ENCODE measurements at regions of chr14 and their contacts with region 1.

Region 1: DNA sequence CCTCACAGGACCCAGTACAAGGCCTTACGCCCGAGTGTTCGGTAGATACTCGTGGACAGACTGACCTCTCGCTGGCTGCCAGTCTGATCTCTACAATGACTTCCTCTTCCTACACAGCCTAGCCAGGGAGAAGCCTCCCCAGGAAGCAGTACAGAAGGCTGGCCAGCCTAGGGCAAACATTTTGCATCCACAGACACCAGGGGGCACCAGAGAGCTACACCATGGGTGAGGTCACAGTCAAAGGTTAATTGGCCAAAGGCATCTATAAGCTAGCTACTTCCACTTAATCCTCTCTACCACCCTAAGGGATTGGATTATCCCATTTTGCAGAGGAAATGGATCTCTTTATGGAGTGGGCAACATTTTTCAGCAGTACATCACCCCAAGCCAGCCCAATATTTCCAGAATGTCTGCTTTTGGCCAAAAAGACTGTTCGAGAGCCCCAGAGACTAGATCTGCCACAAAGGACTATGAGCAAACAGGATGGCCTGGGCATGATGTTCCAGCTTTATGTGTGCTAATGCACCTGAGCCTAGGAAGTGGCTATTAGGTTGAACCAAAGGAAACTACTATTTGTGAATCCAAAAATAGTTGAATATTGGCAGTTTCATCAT is 14.6 kb upstream of the PNMA1 start:
- DNase-seq: peak; percentile 91
- ATAC-seq: peak; percentile 95
- H3K4me3 Mint-ChIP-seq: no peak overlapping the region
- H3K27ac Mint-ChIP-seq: peak overlapping the region; percentile 78
- H3K4me1 Mint-ChIP-seq: peaks cover 44% of the 10 kb centered on the region
- H3K27me3 Mint-ChIP-seq: no peaks in the 10 kb centered on the region

Region 2: DNA sequence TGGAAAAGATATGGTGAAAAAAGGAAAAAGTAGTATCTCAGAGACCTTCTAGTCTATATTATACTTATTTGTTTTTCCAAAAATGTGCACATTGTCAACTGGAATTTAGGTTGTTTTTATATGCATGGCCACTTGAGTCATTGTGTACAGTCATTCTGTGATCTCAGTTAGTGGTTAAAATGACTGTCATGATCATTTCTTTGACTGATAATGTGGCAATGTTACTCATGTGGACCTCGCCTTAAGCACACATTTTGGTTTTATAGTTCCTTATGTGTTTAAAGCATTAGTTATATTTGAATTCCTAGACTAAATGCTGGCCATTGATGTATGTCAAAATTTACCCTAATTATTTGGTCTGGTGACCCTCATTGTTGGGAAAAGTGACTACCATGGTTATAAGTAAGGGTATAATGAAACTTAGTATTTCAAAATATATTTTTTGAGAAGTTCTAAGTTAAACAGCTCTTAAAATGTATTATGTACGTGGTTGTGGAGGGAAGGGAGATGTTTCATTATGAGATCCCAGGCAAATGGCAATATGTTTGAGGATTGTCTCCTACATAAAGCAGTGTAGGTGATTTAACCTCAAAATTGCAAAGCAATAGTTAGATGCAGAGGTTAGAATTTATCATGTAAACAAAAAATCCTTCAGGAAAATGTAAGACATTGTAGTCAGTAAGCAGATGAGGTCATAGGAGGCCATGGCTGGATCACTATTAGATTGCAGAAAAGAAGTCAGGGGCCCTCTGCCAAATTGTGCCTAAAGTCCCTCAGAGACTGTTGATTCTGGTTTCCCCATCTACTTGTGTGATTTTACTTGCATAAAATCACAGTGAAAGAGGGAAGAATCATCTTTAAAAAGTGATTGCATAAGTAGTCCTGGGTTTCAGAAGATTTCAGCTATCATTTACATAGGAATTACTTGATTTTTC is 32.1 kb before region 1 on chr14:
- CTCF ChIA-PET with region 1: no interaction called
- DNase-seq: no peak
- ATAC-seq: peak; percentile 96
- H3K4me3 Mint-ChIP-seq: peak overlapping the region; percentile 51
- H3K27ac Mint-ChIP-seq: peak overlapping the region; percentile 89
- H3K4me1 Mint-ChIP-seq: peaks cover 35% of the 10 kb centered on the region
- H3K27me3 Mint-ChIP-seq: no peaks in the 10 kb centered on the region

Region 3: GRCh38 chr14:73713803-73714655 is 14.8 kb before region 1 on chr14 and contains the start of gene PNMA1:
- CTCF ChIA-PET with region 1: interaction called, 24 read pairs
- DNase-seq: peak; percentile 92
- ATAC-seq: peak; percentile 79
- H3K4me3 Mint-ChIP-seq: peak within 1 kb of the TSS; percentile 96
- H3K27ac Mint-ChIP-seq: peak within 1 kb of the TSS; percentile 95
- H3K4me1 Mint-ChIP-seq: peaks cover 19% of the 10 kb centered on the region
- H3K27me3 Mint-ChIP-seq: no peaks in the 10 kb centered on the region
- total RNA-seq, gene PNMA1: 27.1 to 36.6 TPM

Region 4: GRCh38 chr14:73753959-73754882 is 25.4 kb after region 1 on chr14:
- CTCF ChIA-PET with region 1: interaction called, 52 read pairs
- DNase-seq: peak; percentile 87
- ATAC-seq: peak; percentile 34
- H3K4me3 Mint-ChIP-seq: peak overlapping the region; percentile 77
- H3K27ac Mint-ChIP-seq: peak overlapping the region; percentile 92
- H3K4me1 Mint-ChIP-seq: peaks cover 91% of the 10 kb centered on the region
- H3K27me3 Mint-ChIP-seq: no peaks in the 10 kb centered on the region

Region 5: GRCh38 chr14:73759714-73760597 is 31.1 kb after region 1 on chr14:
- CTCF ChIA-PET with region 1: interaction called, 52 read pairs
- DNase-seq: peak; percentile 97
- ATAC-seq: peak; percentile 79
- H3K4me3 Mint-ChIP-seq: peak overlapping the region; percentile 87
- H3K27ac Mint-ChIP-seq: peak overlapping the region; percentile 90
- H3K4me1 Mint-ChIP-seq: peaks cover 77% of the 10 kb centered on the region
- H3K27me3 Mint-ChIP-seq: no peaks in the 10 kb centered on the region

Region 6: GRCh38 chr14:73777401-73777800 is 48.6 kb after region 1 on chr14:
- CTCF ChIA-PET with region 1: interaction called, 11 read pairs
- DNase-seq: no peak
- ATAC-seq: peak; percentile 15
- H3K4me3 Mint-ChIP-seq: no peak overlapping the region
- H3K27ac Mint-ChIP-seq: peak overlapping the region; percentile 19
- H3K4me1 Mint-ChIP-seq: peaks cover 58% of the 10 kb centered on the region
- H3K27me3 Mint-ChIP-seq: no peaks in the 10 kb centered on the region

Region 7: GRCh38 chr14:73785873-73786695 is 57.3 kb after region 1 on chr14:
- CTCF ChIA-PET with region 1: interaction called, 32 read pairs
- DNase-seq: peak; percentile 88
- ATAC-seq: peak; percentile 67
- H3K4me3 Mint-ChIP-seq: peak overlapping the region; percentile 85
- H3K27ac Mint-ChIP-seq: peak overlapping the region; percentile 95
- H3K4me1 Mint-ChIP-seq: peaks cover 56% of the 10 kb centered on the region
- H3K27me3 Mint-ChIP-seq: no peaks in the 10 kb centered on the region

Region 8: GRCh38 chr14:73825551-73826188 is 96.8 kb after region 1 on chr14:
- CTCF ChIA-PET with region 1: interaction called, 136 read pairs
- DNase-seq: peak; percentile 86
- ATAC-seq: peak; percentile 70
- H3K4me3 Mint-ChIP-seq: no peak overlapping the region
- H3K27ac Mint-ChIP-seq: no peak overlapping the region
- H3K4me1 Mint-ChIP-seq: peaks cover 37% of the 10 kb centered on the region
- H3K27me3 Mint-ChIP-seq: no peaks in the 10 kb centered on the region

Measured in activated CD8-positive, alpha-beta memory T cell treated with anti-CD3 and anti-CD28 coated beads, Interleukin-2, amount 10 ng/mL, durations not matched to agents 7 days and 5 days (primary cell).